Activated naive CD8-positive, alpha-beta T cell treated with anti-CD3 and anti-CD28 coated beads, Interleukin-2, amount 10 ng/mL, durations not matched to agents 7 days and 5 days (primary cell): ENCODE measurements at regions of chrX and their contacts with region 1.

Region 1: DNA sequence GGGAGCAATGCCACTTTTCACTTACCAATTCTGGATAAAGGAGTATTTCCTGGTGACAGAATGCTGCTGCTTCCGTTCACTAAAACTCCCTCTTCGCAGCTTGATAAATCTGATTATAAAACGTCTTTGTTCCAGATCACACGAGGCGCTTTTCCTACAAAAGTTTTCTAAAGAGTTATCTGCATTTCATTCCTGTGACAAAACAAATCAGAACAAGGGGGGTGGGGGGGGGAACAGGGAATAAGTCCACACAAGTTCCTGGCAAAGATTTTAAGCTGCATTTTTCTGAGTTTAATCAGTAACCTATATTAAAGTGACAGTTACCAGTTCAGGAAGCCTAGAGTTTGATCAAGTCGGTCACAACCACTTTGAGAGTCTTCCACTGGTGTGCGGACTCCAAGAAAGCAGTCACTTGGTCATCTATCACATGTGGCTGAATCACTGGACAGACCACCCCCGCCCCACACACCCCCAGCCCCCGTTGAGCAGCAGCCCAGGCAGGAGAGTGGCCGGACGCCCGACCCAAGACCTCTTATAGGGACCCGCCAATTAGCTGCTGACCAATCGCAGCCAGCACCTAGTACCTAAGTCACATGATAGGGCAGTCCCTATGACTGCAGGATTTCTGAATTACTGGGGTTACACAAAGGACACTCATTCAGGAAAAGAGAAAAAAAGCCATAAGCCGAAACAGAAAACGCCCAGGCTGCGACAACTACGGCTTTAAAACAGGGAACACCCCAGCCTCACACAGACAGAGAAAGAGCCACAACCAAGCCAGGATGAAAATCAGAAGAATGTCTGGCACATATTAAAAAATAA is 569.3 kb upstream of the DIPK2B start:
- DNase-seq: peak; percentile 54
- ATAC-seq: peak; percentile 83
- H3K4me3 Mint-ChIP-seq: peak overlapping the region; percentile 87
- H3K27ac Mint-ChIP-seq: peak overlapping the region; percentile 89
- H3K4me1 Mint-ChIP-seq: peaks cover 33% of the 10 kb centered on the region
- H3K27me3 Mint-ChIP-seq: no peaks in the 10 kb centered on the region

Region 2: DNA sequence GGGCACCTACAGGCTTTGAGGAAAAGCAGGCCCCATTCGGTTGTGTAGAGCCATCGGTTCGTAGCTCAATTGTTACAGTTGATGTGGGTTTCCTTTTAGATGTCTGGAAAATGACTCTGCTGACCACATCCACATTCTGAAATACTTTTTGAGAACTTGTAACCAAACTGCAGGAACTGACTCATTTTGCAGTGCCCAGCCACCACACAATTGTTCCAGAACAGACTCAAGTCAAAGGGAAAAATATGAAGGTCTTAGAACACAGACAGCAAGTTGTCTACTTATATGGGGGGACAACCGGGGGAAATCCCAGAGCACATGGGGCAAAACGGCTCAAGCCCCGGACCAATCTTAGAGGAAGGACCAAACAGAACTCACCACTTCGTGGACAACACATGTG is 11.7 kb before region 1 on chrX:
- POLR2A ChIA-PET with region 1: interaction called, 60 read pairs
- DNase-seq: peak; percentile 38
- ATAC-seq: peak; percentile 44
- H3K4me3 Mint-ChIP-seq: peak overlapping the region; percentile 88
- H3K27ac Mint-ChIP-seq: peak overlapping the region; percentile 95
- H3K4me1 Mint-ChIP-seq: peaks cover 58% of the 10 kb centered on the region
- H3K27me3 Mint-ChIP-seq: no peaks in the 10 kb centered on the region

Region 3: GRCh38 chrX:45806410-45807121 is 36.6 kb after region 1 on chrX:
- POLR2A ChIA-PET with region 1: interaction called, 15 read pairs
- DNase-seq: no peak
- ATAC-seq: peak; percentile 87
- H3K4me3 Mint-ChIP-seq: peak overlapping the region; percentile 81
- H3K27ac Mint-ChIP-seq: peak overlapping the region; percentile 90
- H3K4me1 Mint-ChIP-seq: peaks cover 54% of the 10 kb centered on the region
- H3K27me3 Mint-ChIP-seq: no peaks in the 10 kb centered on the region